H1 (cell line): ENCODE measurements at regions of chr11 and their contacts with region 1.

Region 1: GRCh38 chr11:84558085-84558905 is 1068.8 kb downstream of the DLG2 start:
- DNase-seq: no peak
- H3K4me3 ChIP-seq: no peak overlapping the region
- H3K27ac ChIP-seq: no peak overlapping the region
- H3K4me1 ChIP-seq: no peaks in the 10 kb centered on the region
- H3K27me3 ChIP-seq: no peaks in the 10 kb centered on the region
- CTCF ChIP-seq: peak in 2 of 3 experiments; percentile 76; a peak in 3 of 4 replicates
- EP300 ChIP-seq: no peak
- POLR2A ChIP-seq: no peak
- RAD21 ChIP-seq: peak; percentile 91 to 92

Region 2: DNA sequence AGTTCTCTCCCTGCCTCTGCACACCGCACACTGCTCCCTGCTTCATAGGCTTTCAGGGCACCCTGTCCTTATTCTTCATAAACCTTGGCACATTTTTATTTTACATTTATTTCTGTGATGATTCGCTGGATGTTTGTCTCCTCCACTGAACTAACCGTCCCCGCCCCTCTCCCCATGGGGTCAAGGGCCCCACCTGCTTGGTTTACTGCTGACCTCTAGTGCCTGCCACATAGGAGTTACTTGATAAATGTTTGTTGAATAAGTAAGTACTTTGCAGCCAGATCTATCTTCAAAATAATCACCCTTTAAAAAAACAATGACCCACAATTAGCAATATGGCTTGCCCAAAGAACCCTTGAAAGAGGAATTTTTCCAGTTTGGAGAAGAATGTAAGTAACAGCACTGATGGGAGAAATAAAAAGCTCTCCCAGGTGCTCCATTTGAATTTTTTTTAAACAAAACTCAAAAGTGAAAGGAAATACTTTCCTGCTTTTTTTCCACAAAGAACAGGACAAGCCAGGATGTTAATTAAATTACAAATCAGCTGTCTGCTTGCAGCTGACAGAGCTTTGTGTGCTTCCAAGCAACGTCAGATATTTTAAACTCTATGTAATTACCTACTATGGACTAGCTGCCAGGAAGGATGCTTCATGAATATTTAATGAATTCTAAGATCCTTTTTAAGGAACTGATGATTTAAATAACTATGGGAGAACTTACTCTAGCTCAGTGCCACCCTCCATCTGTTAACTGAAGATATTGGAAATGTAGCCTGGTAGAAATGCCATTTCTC is 14.7 kb before region 1 on chr11:
- CTCF ChIA-PET with region 1: interaction called, 18 read pairs
- POLR2A ChIA-PET with region 1: no interaction called
- DNase-seq: peak; percentile 43 to 88
- H3K4me3 ChIP-seq: peak overlapping the region in 2 of 4 experiments; percentile 16 to 43; a peak in 4 of 8 replicates
- H3K27ac ChIP-seq: peak overlapping the region; percentile 27
- H3K4me1 ChIP-seq: peaks cover 0 to 14% (median 8%) of the 10 kb centered on the region in 4 experiments; a peak in 4 of 7 replicates
- H3K27me3 ChIP-seq: no peaks in the 10 kb centered on the region
- CTCF ChIP-seq: peak; percentile 27 to 59 (median 47)
- EP300 ChIP-seq: no peak; a peak in 1 of 3 replicates
- POLR2A ChIP-seq: no peak
- RAD21 ChIP-seq: peak; percentile 72 to 81

Region 3: GRCh38 chr11:84626256-84626655 is 68.0 kb after region 1 on chr11:
- CTCF ChIA-PET with region 1: no interaction called
- POLR2A ChIA-PET with region 1: no interaction called
- DNase-seq: no peak
- H3K4me3 ChIP-seq: no peak overlapping the region
- H3K27ac ChIP-seq: no peak overlapping the region
- H3K4me1 ChIP-seq: no peaks in the 10 kb centered on the region
- H3K27me3 ChIP-seq: no peaks in the 10 kb centered on the region
- CTCF ChIP-seq: no peak
- EP300 ChIP-seq: no peak
- POLR2A ChIP-seq: no peak
- RAD21 ChIP-seq: no peak

Region 4: GRCh38 chr11:84714316-84714780 is 156.1 kb after region 1 on chr11:
- CTCF ChIA-PET with region 1: interaction called, 100 read pairs
- POLR2A ChIA-PET with region 1: interaction called, 6 read pairs
- DNase-seq: peak in 1 of 2 experiments; percentile 85
- H3K4me3 ChIP-seq: no peak overlapping the region
- H3K27ac ChIP-seq: no peak overlapping the region
- H3K4me1 ChIP-seq: no peaks in the 10 kb centered on the region; a peak in 1 of 7 replicates
- H3K27me3 ChIP-seq: peaks cover 0 to 8% (median 2%) of the 10 kb centered on the region in 4 experiments; a peak in 4 of 7 replicates
- CTCF ChIP-seq: peak; percentile 66 to 80 (median 79)
- EP300 ChIP-seq: no peak
- POLR2A ChIP-seq: no peak
- RAD21 ChIP-seq: peak; percentile 87 to 89

Region 5: DNA sequence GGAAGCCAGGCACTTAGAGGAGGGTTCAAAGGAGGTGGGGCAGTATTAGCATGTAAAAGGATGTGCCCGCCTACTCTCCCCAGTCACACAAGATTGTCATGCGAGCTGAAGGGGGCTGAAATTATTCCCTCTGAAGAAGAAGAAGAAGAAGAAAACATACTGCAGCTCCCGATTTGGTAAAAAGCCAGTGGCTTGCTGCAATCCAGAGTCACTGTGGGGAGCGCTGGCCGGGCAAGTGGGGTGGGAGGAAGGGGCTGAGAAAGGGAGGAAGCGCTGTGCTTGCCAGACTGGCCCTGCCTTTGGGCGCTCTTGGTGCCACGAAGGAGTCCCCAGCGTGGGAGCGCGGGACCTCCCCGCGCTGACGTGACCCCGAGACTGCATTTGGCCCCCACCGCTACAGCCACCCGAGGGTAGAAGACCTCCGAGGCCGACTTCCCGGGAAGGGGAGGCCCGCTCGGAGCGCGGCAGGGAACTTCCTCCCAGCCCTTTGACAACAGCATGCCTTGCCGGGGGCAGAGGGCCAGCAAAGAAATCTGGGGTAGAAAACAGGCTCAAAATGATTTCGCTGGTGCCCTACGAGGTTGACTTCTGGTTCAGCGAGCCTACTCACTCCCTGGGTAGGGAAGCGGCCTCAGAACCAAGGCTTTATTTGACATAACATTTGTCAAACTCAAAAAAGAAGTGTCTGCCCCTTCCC is 162.6 kb after region 1 on chr11:
- CTCF ChIA-PET with region 1: interaction called, 19 read pairs
- POLR2A ChIA-PET with region 1: interaction called, 6 read pairs
- DNase-seq: peak in 1 of 2 experiments; percentile 77
- H3K4me3 ChIP-seq: peak overlapping the region; percentile 54 to 77 (median 68)
- H3K27ac ChIP-seq: no peak overlapping the region
- H3K4me1 ChIP-seq: peaks cover 3 to 6% (median 5%) of the 10 kb centered on the region in 4 experiments; a peak in 5 of 7 replicates
- H3K27me3 ChIP-seq: peaks cover 0 to 11% (median 2%) of the 10 kb centered on the region in 4 experiments; a peak in 4 of 7 replicates
- CTCF ChIP-seq: no peak
- EP300 ChIP-seq: no peak
- POLR2A ChIP-seq: no peak
- RAD21 ChIP-seq: no peak